ENCODE measurements at regions of chr7 and their contacts with region 1.

Region 1: DNA sequence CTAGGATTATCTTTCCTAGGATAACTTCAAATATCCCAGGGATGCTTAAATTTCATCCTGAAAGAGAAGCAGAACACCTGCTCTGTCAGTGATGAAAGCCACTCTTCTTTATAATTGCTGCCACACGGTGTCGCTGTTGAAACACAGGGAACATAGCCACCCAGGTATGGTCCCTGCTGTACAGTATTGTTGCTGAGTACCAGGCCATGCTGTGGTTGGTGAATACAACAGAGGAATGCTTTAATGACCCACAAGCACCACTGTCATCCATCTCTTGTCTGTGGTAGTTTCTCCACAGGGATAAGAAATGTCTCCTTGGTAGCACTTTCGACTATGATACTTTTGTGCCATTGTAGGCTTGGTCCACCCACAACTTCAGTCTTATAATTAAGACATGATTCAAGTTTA is 70.6 kb upstream of the STARD3NL start:
- DNase-seq: peak; percentile 57
- H3K4me3 ChIP-seq: no peak overlapping the region; a peak in 1 of 4 replicates
- H3K27ac ChIP-seq: no peak overlapping the region
- H3K4me1 ChIP-seq: no peaks in the 10 kb centered on the region; a peak in 1 of 4 replicates
- H3K27me3 ChIP-seq: no peaks in the 10 kb centered on the region
- CTCF ChIP-seq: peak; percentile 94
- EP300 ChIP-seq: no peak
- RAD21 ChIP-seq: peak; percentile 87

Region 2: GRCh38 chr7:37916673-37917660 is 190.5 kb before region 1 on chr7 and contains the start of gene SFRP4:
- CTCF ChIA-PET with region 1: interaction called, 15 read pairs
- POLR2A ChIA-PET with region 1: no interaction called
- DNase-seq: peak; percentile 77
- H3K4me3 ChIP-seq: peak within 1 kb of the TSS; percentile 51 to 54
- H3K27ac ChIP-seq: no peak within 1 kb of the TSS
- H3K4me1 ChIP-seq: peaks cover 0 to 26% of the 10 kb centered on the region in 2 experiments; a peak in 2 of 4 replicates
- H3K27me3 ChIP-seq: peaks cover 39% of the 10 kb centered on the region; the same call in 1 of the 2 replicates
- CTCF ChIP-seq: peak; percentile 82
- EP300 ChIP-seq: no peak
- RAD21 ChIP-seq: peak; percentile 69
- polyA plus RNA-seq, gene SFRP4: 0.03 TPM in 1 of 2 replicates, not detected in the other

Region 3: GRCh38 chr7:38086857-38087256 is 20.6 kb before region 1 on chr7:
- CTCF ChIA-PET with region 1: interaction called, 19 read pairs
- POLR2A ChIA-PET with region 1: no interaction called
- DNase-seq: no peak
- H3K4me3 ChIP-seq: no peak overlapping the region
- H3K27ac ChIP-seq: no peak overlapping the region
- H3K4me1 ChIP-seq: no peaks in the 10 kb centered on the region
- H3K27me3 ChIP-seq: no peaks in the 10 kb centered on the region
- CTCF ChIP-seq: no peak
- EP300 ChIP-seq: no peak
- RAD21 ChIP-seq: no peak

Region 4: DNA sequence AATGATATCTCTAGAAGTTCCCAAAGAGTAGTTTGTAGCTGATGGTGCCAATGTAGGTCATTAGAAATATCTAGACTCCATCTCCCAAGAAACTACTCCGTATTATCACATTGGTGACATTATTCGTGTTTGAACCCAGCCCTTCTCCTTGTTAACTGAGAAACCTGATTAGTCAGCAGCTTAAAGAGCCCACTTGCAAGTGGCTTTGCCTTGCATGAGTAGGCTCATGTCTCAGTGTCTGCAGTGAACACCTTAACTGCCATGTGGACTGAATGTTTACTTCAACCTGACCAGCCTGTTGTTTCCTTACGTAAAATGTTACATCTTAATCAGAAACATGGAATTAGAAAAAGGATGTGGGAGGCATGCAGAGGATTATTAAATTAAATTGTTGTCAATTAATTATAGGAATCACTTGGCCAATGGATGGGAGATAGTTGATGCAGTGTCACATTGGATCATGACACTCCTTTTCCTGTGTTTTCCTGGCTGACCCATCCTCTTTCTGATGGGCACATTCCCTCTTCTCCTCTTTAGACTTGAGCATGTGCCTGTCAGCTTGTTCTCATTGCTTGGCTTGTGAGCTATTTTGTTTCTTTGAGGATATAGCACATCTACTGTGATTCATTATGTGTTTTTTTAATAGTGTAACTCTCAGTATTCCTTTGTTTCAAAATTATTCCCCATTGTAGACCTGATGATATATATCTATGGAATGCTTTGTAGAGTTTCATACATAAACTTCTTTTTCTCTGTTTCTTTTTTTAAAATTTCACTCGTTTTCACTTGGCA is 88.5 kb after region 1 on chr7:
- CTCF ChIA-PET with region 1: interaction called, 10 read pairs
- POLR2A ChIA-PET with region 1: no interaction called
- DNase-seq: no peak
- H3K4me3 ChIP-seq: no peak overlapping the region
- H3K27ac ChIP-seq: peak overlapping the region in 1 of 2 experiments; percentile 45; a peak in 2 of 4 replicates
- H3K4me1 ChIP-seq: peaks cover 22 to 40% of the 10 kb centered on the region in 2 experiments; a peak in 3 of 4 replicates
- H3K27me3 ChIP-seq: no peaks in the 10 kb centered on the region
- CTCF ChIP-seq: no peak
- EP300 ChIP-seq: no peak
- RAD21 ChIP-seq: no peak

Region 5: GRCh38 chr7:38318803-38319416 is 211.4 kb after region 1 on chr7:
- CTCF ChIA-PET with region 1: interaction called, 19 read pairs
- POLR2A ChIA-PET with region 1: no interaction called
- DNase-seq: peak; percentile 67
- H3K4me3 ChIP-seq: no peak overlapping the region
- H3K27ac ChIP-seq: no peak overlapping the region
- H3K4me1 ChIP-seq: peaks cover 0 to 8% of the 10 kb centered on the region in 2 experiments; a peak in 1 of 4 replicates
- H3K27me3 ChIP-seq: no peaks in the 10 kb centered on the region
- CTCF ChIP-seq: peak; percentile 72
- EP300 ChIP-seq: no peak
- RAD21 ChIP-seq: peak; percentile 85

Region 6: DNA sequence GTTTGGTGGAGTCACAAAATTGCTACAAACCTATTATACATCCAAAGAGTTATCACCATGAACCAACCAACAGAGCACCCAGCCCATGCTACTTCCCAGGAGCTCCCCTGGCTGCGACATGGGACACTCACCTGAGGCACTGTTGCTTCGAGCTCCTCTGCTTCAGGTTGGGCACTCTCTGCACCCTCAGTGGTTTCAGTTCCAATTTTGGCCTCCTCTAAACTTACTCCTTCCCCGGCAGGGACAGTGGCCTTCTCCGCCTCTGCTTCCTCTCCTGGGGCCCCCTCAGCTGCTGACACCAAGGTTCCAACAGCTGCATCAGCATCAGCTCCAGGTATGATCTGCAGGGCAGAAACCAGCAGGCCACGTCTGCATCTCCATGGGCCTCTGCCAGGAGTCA is 286.4 kb after region 1 on chr7:
- CTCF ChIA-PET with region 1: no interaction called
- POLR2A ChIA-PET with region 1: no interaction called
- DNase-seq: no peak
- H3K4me3 ChIP-seq: no peak overlapping the region
- H3K27ac ChIP-seq: no peak overlapping the region
- H3K4me1 ChIP-seq: no peaks in the 10 kb centered on the region
- H3K27me3 ChIP-seq: no peaks in the 10 kb centered on the region; the same call in 1 of the 2 replicates
- CTCF ChIP-seq: no peak
- EP300 ChIP-seq: no peak
- RAD21 ChIP-seq: no peak

Measured in SK-N-SH (cell line).